Tibial artery (tissue), 4 donors: ENCODE measurements at regions of chr5 and their contacts with region 1.

Region 1: DNA sequence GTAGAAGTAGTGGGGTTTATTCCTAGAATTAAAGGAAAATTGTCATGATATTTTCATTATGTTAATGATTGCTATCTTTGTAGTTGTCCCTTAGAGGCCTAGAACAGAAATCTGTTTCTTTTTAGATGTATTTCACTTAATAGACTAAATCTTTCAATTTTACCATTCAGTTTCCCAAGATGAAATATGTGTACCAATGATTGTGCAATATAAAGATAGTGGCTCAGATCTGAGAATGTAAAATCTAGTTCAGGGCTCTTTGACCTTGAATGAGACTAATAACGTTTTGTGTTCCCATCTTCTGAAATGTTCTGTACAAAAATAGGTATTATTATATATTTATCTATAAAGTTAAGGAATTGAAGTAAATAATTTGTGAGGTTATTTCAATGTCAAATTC is 947.9 kb downstream of the DTWD2 start:
- DNase-seq: no peak
- H3K4me3 ChIP-seq: no peak overlapping the region
- H3K27ac ChIP-seq: no peak overlapping the region
- H3K4me1 ChIP-seq: no peaks in the 10 kb centered on the region
- H3K27me3 ChIP-seq: no peaks in the 10 kb centered on the region
- CTCF ChIP-seq: no peak

Region 2: GRCh38 chr5:117748336-117748735 is 292.2 kb before region 1 on chr5:
- intact Hi-C with region 1: no loop called
- DNase-seq: no peak
- H3K4me3 ChIP-seq: no peak overlapping the region
- H3K27ac ChIP-seq: no peak overlapping the region
- H3K4me1 ChIP-seq: no peaks in the 10 kb centered on the region
- H3K27me3 ChIP-seq: no peaks in the 10 kb centered on the region
- CTCF ChIP-seq: no peak

Region 3: GRCh38 chr5:118052503-118052902 is 12.0 kb after region 1 on chr5:
- intact Hi-C with region 1: loop called (anchors 2 kb)
- DNase-seq: no peak
- H3K4me3 ChIP-seq: no peak overlapping the region
- H3K27ac ChIP-seq: no peak overlapping the region
- H3K4me1 ChIP-seq: no peaks in the 10 kb centered on the region
- H3K27me3 ChIP-seq: no peaks in the 10 kb centered on the region
- CTCF ChIP-seq: no peak